Ovary (tissue), 10 donors: ENCODE measurements at regions of chr3 and their contacts with region 1.

Region 1: DNA sequence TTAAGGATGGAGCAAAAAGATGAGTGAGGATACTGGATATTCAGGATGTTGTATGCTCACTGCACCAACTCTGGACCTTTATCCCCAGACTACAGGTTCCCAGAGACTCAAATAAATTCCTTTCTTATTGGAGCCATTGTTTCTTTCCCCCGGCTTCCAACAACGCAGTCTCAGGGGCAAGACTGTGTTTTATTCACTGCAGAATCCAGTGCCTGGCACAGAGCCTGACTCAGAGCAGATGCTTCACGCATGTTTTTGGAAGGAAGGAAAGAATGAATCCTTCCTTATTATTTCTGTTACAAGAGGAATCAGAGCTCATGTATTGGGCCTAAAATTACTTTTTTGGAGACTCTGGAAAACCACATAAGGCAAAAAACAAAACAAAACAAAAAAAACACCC is 96.0 kb upstream of the VGLL4 start:
- DNase-seq: peak; percentile 16 to 60 (median 35)
- H3K4me3 ChIP-seq: no peak overlapping the region
- H3K27ac ChIP-seq: no peak overlapping the region
- H3K4me1 ChIP-seq: no peaks in the 10 kb centered on the region
- H3K27me3 ChIP-seq: no peaks in the 10 kb centered on the region
- CTCF ChIP-seq: no peak
- EP300 ChIP-seq: no peak
- POLR2A ChIP-seq: no peak

Region 2: DNA sequence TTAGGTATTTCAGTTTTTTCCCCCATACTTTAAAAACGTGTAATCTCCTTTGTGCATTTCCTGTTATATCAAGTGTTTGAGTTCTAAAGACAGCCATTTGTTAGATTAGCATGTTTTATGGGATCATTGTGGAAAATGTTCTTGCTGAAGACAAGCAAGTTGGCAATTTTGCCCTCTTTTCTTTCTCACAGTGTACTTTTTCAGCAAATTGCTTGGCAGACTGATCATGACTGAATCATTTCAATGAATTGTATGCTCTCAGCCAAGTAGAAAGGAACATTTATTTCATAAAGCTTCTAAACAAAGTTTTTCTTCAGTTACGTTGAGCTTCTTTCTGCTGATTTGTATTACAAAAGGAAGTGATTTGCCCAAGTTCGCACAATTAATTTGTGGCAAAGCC is 415.9 kb before region 1 on chr3:
- intact Hi-C with region 1: no loop called
- DNase-seq: no peak
- H3K4me3 ChIP-seq: no peak overlapping the region
- H3K27ac ChIP-seq: no peak overlapping the region
- H3K4me1 ChIP-seq: no peaks in the 10 kb centered on the region
- H3K27me3 ChIP-seq: no peaks in the 10 kb centered on the region
- CTCF ChIP-seq: no peak
- EP300 ChIP-seq: no peak
- POLR2A ChIP-seq: no peak

Region 3: GRCh38 chr3:12746419-12746818 is 1006.7 kb after region 1 on chr3:
- intact Hi-C with region 1: loop called in 1 of 4 experiments (anchors 5 kb)
- DNase-seq: no peak
- H3K4me3 ChIP-seq: no peak overlapping the region
- H3K27ac ChIP-seq: no peak overlapping the region
- H3K4me1 ChIP-seq: peaks cover 5% of the 10 kb centered on the region
- H3K27me3 ChIP-seq: no peaks in the 10 kb centered on the region
- CTCF ChIP-seq: no peak
- EP300 ChIP-seq: no peak
- POLR2A ChIP-seq: no peak